ENCODE measurements at regions of chr6 and their contacts with region 1.

Region 1: DNA sequence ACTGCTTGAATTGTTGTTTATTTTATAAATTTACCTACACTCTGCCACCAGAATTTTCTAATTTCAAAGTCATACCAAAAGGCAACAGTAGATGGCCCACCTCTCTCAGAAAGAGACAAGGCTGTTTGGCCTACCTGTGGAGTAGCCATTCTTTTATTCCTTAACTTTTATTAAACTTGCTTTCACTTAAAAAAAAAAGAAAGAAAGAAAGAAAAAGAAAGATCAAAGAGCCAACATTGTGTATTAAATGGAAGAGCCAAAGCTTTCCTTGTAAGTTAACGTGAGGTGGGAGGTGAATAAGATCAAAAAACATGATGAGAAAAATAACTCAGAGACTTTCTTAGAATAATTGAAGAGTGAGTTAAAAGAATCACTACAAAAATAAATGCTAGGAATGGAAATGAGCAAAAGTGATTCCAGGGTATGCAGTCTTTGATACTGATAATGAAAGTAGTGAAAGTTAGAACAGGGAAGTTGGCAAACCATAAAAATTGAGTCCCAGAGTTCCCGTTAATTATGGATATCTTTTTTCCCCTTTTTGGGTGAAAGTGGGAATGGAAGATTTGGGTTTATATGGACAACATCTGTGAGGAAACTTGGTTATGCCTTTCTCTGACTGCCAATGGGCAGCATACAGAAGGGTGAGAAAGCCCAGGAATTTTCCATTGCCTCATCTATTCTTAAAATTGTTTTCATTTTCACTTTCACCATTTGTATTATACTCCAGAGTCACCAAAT is 35.9 kb upstream of the MYB start:
- DNase-seq: peak; percentile 44 to 76 (median 50)
- ATAC-seq: peak; percentile 60
- H3K4me3 ChIP-seq: no peak overlapping the region
- H3K27ac ChIP-seq: peak overlapping the region; percentile 77
- H3K4me1 ChIP-seq: peaks cover 6 to 55% of the 10 kb centered on the region in 2 experiments
- H3K27me3 ChIP-seq: no peaks in the 10 kb centered on the region
- CTCF ChIP-seq: peak; percentile 61 to 85 (median 71); a peak in 5 of 6 replicates
- EP300 ChIP-seq: no peak
- POLR2A ChIP-seq: no peak
- RAD21 ChIP-seq: peak; percentile 86 to 91

Region 2: DNA sequence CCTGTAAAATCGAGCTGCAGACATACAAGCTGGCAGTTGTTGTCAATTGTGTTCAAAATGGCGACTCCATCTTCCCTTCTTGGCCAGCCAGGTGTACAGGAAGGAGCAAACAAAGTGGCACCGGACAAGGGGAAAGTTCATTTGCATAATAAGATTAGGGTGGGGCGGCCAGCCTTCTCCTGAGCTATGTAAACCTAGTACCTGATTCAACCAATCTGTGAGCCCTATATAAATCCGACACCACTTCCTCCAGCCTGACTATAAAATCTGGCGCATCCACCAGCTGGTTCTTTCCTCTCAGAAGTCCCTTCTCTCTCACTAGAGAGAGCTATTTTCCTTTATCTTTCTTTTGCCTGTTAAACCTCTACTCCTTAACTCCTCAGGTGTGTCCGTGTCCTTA is 82.5 kb before region 1 on chr6:
- CTCF ChIA-PET with region 1: no interaction called
- POLR2A ChIA-PET with region 1: no interaction called
- in situ Hi-C with region 1: no loop called
- intact Hi-C with region 1: loop called (anchors 5 kb)
- DNase-seq: peak in 2 of 4 experiments; percentile 30 to 55
- ATAC-seq: peak; percentile 87
- H3K4me3 ChIP-seq: no peak overlapping the region
- H3K27ac ChIP-seq: no peak overlapping the region
- H3K4me1 ChIP-seq: peaks cover 0 to 3% of the 10 kb centered on the region in 2 experiments; a peak in 1 of 5 replicates
- H3K27me3 ChIP-seq: no peaks in the 10 kb centered on the region
- CTCF ChIP-seq: peak; percentile 33 to 58 (median 36); a peak in 3 of 6 replicates
- EP300 ChIP-seq: no peak
- POLR2A ChIP-seq: no peak
- RAD21 ChIP-seq: peak; percentile 67 to 77

Region 3: DNA sequence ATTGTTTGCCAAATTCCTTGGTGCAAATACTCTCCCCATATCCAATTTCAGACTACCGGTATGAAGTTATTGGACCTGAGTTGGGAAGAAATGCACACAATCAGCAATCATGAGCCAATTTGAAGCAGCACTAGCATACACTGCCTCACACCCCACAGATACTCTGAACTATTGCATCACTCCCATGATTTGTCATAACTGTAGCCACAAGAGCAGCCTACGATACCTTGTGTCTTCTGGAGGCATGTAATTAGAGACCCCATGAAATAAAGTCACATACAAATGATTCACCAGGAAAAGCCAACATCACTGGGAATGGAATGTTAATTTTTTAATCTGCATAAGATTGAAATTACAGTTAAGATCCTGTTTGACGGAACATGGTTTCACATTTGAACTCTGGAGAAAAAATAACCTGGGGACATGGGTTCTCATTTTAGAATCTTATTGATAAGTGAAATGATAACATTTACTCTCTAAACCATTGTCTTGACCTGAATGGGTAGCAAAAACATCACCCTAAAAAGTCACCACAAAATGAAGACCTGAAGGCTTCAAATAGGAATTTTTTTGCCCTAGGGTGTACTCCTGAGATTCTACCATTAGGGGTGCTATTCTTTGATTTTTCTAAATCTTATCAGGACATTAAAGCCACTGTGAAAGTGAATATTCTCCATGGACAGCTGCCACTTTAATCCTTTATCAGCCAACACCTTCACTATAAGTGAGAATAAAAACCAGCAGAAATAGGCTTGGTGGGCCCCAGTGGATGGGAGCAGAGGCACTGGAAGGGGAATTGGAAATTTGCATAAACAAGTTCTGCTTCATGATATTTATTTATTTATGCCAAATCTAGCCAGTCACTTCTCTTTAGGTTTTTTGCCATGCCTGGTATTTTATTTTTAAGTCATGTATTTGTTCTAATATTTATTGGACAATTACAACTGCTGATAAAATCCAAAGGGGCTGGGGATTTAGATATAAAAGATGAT is 56.1 kb before region 1 on chr6:
- CTCF ChIA-PET with region 1: interaction called, 3 read pairs
- POLR2A ChIA-PET with region 1: interaction called, 3 read pairs
- in situ Hi-C with region 1: no loop called
- intact Hi-C with region 1: loop called (anchors 2 kb)
- DNase-seq: peak; percentile 52 to 60 (median 58)
- ATAC-seq: peak; percentile 63
- H3K4me3 ChIP-seq: no peak overlapping the region
- H3K27ac ChIP-seq: peak overlapping the region; percentile 19; the same call in 1 of the 3 replicates
- H3K4me1 ChIP-seq: peaks cover 29 to 86% of the 10 kb centered on the region in 2 experiments
- H3K27me3 ChIP-seq: no peaks in the 10 kb centered on the region
- CTCF ChIP-seq: peak in 2 of 3 experiments; percentile 55 to 60; a peak in 5 of 6 replicates
- EP300 ChIP-seq: 0 out of 2 replicates have a peak, but pooled peaks have one; percentile 13
- POLR2A ChIP-seq: no peak
- RAD21 ChIP-seq: no peak; a peak in 1 of 4 replicates

Region 4: GRCh38 chr6:135162678-135163439 is 17.6 kb after region 1 on chr6:
- CTCF ChIA-PET with region 1: interaction called, 3 read pairs
- POLR2A ChIA-PET with region 1: interaction called, 13 read pairs
- in situ Hi-C with region 1: no loop called
- intact Hi-C with region 1: no loop called
- DNase-seq: peak; percentile 72 to 86 (median 74)
- ATAC-seq: peak; percentile 89
- H3K4me3 ChIP-seq: no peak overlapping the region
- H3K27ac ChIP-seq: no peak overlapping the region
- H3K4me1 ChIP-seq: peaks cover 0 to 17% of the 10 kb centered on the region in 2 experiments; a peak in 3 of 5 replicates
- H3K27me3 ChIP-seq: no peaks in the 10 kb centered on the region
- CTCF ChIP-seq: peak; percentile 72 to 91 (median 73)
- EP300 ChIP-seq: no peak
- POLR2A ChIP-seq: no peak
- RAD21 ChIP-seq: no peak; a peak in 1 of 4 replicates

Region 5: DNA sequence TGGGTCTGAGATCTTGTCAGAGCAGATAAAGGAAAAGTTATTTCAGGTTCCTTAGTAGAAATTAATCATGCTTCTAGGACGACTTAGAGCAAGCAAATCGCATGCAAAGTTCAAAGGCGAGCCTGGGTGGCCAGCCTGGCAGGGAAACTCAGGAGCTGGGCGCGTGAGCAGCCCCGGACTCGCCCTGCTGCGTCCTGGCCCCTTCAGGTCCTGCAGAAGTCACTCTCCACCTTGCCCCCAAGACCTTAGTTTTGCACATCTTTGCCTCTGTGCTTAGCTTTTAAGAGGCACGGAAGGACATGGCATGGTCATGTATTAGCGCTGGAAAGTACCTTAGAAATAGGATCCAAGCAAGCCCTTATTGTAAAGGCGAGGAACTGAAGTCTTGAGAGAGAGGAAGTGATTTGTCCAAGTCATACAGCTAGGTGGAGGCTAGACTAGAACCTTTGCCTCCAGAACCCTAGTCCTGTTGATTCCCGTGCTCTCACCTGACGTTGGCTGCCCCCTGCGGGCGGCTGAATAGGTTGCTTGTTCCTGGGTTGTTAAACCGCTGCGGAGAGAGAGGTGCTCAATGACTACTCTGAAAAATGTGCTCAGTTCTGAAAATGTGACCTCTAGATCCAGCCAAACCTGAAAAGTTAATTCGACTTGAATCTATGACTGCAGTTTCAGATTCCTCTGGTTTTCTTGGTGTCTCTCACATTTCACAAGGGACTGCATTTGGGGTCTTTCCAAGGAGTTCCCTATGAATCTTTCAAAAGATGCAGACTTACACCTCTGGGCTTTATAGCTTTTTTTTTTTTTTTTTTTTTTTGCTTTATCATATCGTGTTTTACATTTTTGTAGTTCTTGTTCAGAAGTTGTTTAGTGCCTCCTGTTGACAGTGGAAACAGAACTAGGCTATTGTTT is 38.6 kb after region 1 on chr6:
- CTCF ChIA-PET with region 1: interaction called, 20 read pairs
- POLR2A ChIA-PET with region 1: interaction called, 6 read pairs
- in situ Hi-C with region 1: loop called (anchors 5 kb)
- intact Hi-C with region 1: loop called (anchors 1 kb)
- DNase-seq: peak; percentile 66 to 96 (median 76)
- ATAC-seq: peak; percentile 81
- H3K4me3 ChIP-seq: peak overlapping the region; percentile 71
- H3K27ac ChIP-seq: peak overlapping the region; percentile 73
- H3K4me1 ChIP-seq: peaks cover 23 to 26% of the 10 kb centered on the region in 2 experiments
- H3K27me3 ChIP-seq: no peaks in the 10 kb centered on the region
- CTCF ChIP-seq: peak; percentile 87 to 92 (median 92)
- EP300 ChIP-seq: peak; percentile 10
- POLR2A ChIP-seq: no peak
- RAD21 ChIP-seq: peak; percentile 85 to 87

Region 6: GRCh38 chr6:135212020-135212806 is 67.0 kb after region 1 on chr6:
- CTCF ChIA-PET with region 1: no interaction called
- POLR2A ChIA-PET with region 1: no interaction called
- in situ Hi-C with region 1: no loop called
- intact Hi-C with region 1: no loop called
- DNase-seq: no peak
- ATAC-seq: no peak
- H3K4me3 ChIP-seq: no peak overlapping the region
- H3K27ac ChIP-seq: no peak overlapping the region
- H3K4me1 ChIP-seq: no peaks in the 10 kb centered on the region; a peak in 1 of 5 replicates
- H3K27me3 ChIP-seq: no peaks in the 10 kb centered on the region
- CTCF ChIP-seq: no peak
- EP300 ChIP-seq: no peak
- POLR2A ChIP-seq: no peak
- RAD21 ChIP-seq: no peak

Region 7: DNA sequence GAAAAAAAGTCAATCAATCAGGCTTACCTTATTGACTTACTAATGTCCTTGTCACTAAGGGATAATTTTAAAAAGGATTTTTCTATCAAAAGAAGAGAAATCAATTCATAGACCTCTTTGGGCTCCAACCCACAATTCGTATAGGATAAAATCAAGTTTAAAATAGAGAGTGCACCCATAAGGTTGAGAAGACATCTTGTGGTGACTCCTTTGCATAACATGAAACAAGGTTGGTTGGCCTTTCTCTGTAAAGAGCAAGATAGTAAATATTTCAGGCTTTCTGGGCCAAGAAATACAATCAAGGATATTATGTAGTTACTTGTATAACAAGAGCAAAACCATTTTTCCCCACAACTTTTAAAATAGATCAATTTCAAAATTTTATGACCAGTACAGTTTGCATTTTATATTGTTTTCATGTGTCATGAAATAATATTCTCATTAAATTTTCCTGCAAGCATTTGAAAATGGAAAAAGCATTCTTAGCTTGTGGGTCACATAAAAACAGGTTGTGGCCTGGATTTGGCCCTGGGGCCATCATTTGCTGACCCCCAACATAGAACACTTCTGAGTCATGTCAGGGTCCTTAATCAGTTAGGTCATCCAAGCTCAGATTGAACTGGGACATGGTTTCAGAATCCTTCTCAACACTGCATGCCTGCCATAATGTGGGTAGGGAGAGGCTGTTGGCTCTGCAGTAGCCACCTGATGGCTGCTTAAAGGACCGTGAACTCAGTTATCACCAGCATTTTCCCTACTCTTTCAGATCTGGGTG is 112.6 kb after region 1 on chr6:
- CTCF ChIA-PET with region 1: no interaction called
- POLR2A ChIA-PET with region 1: no interaction called
- in situ Hi-C with region 1: no loop called
- intact Hi-C with region 1: loop called (anchors 2 kb)
- DNase-seq: peak in 1 of 4 experiments; percentile 50
- ATAC-seq: peak; percentile 58
- H3K4me3 ChIP-seq: no peak overlapping the region
- H3K27ac ChIP-seq: no peak overlapping the region
- H3K4me1 ChIP-seq: peaks cover 16 to 68% of the 10 kb centered on the region in 2 experiments
- H3K27me3 ChIP-seq: no peaks in the 10 kb centered on the region
- CTCF ChIP-seq: peak in 1 of 3 experiments; percentile 47; a peak in 2 of 6 replicates
- EP300 ChIP-seq: no peak
- POLR2A ChIP-seq: no peak
- RAD21 ChIP-seq: peak; percentile 40 to 65

Measured in K562 (cell line).